Heart right ventricle (tissue), 16 donors: ENCODE measurements at regions of chr19 and their contacts with region 1.

Region 1: GRCh38 chr19:43265664-43266025 is 3.7 kb downstream of the PSG9 start:
- DNase-seq: no peak
- ATAC-seq: no peak
- H3K4me3 ChIP-seq: no peak overlapping the region
- H3K27ac ChIP-seq: no peak overlapping the region
- H3K4me1 ChIP-seq: no peaks in the 10 kb centered on the region
- H3K27me3 ChIP-seq: peaks cover 0 to 4% (median 0%) of the 10 kb centered on the region in 7 donors
- CTCF ChIP-seq: no peak

Region 2: GRCh38 chr19:43191191-43191590 is 74.5 kb before region 1 on chr19:
- intact Hi-C with region 1: loop called in 1 of 10 experiments (anchors 5 kb)
- DNase-seq: no peak
- ATAC-seq: no peak
- H3K4me3 ChIP-seq: no peak overlapping the region
- H3K27ac ChIP-seq: no peak overlapping the region
- H3K4me1 ChIP-seq: no peaks in the 10 kb centered on the region
- H3K27me3 ChIP-seq: peaks cover 0 to 16% (median 7%) of the 10 kb centered on the region in 7 donors
- CTCF ChIP-seq: no peak

Region 3: GRCh38 chr19:43207991-43208390 is 57.7 kb before region 1 on chr19:
- intact Hi-C with region 1: no loop called
- DNase-seq: no peak
- ATAC-seq: no peak
- H3K4me3 ChIP-seq: no peak overlapping the region
- H3K27ac ChIP-seq: no peak overlapping the region
- H3K4me1 ChIP-seq: no peaks in the 10 kb centered on the region
- H3K27me3 ChIP-seq: peaks cover 0 to 5% (median 0%) of the 10 kb centered on the region in 7 donors
- CTCF ChIP-seq: no peak